Activated T-helper 1 cell treated with anti-CD3 and anti-CD28 coated beads, Interleukin-12 subunit alpha, Interleukin-12 subunit beta, Interleukin-2, Interleukin-4 antibody, amounts not matched to agents 30 ng/mL and 10 ng/mL and 1 ng/mL, durations not matched to agents 14 hours and 24 hours and 36 hours (primary cell): ENCODE measurements at regions of chr7 and their contacts with region 1.

Region 1: DNA sequence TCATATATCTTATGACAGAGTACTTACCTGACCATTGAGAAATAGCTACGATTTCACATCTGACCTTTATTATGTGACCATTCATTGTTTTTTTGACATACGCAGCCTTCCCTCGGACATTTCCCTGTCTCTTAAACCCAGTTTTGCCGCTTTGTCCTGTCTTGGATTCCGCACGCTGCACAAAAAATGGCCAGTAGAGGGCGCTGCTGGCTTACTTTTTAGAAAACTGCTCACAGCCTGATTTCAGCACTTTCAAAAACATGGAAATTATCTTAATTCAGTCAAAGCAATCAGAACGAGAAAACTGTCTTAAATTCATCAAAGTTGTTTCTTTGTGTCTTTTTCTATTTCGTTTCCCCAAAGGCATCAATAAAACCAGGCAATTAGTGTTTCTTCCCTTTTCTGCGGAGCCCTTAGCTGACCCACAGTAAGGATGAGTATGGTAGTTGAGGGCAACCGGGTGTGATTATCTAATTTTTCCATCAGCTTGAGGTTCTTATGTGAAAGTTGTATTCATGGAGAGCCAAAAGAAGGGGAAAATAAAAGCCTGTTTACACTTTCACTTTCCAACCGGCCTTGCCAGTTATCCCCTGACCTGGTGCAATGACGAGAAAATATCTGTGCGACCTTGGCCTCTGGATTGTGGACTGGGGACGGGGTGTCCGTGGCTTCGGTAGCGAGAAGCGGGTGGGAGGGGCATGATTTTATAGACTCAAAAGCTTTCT is 144.4 kb downstream of the DYNC1I1 start:
- DNase-seq: peak; percentile 41
- H3K4me3 Mint-ChIP-seq: no peak overlapping the region
- H3K27ac Mint-ChIP-seq: no peak overlapping the region
- H3K4me1 Mint-ChIP-seq: peaks cover 6% of the 10 kb centered on the region
- H3K27me3 Mint-ChIP-seq: peaks cover 14% of the 10 kb centered on the region

Region 2: DNA sequence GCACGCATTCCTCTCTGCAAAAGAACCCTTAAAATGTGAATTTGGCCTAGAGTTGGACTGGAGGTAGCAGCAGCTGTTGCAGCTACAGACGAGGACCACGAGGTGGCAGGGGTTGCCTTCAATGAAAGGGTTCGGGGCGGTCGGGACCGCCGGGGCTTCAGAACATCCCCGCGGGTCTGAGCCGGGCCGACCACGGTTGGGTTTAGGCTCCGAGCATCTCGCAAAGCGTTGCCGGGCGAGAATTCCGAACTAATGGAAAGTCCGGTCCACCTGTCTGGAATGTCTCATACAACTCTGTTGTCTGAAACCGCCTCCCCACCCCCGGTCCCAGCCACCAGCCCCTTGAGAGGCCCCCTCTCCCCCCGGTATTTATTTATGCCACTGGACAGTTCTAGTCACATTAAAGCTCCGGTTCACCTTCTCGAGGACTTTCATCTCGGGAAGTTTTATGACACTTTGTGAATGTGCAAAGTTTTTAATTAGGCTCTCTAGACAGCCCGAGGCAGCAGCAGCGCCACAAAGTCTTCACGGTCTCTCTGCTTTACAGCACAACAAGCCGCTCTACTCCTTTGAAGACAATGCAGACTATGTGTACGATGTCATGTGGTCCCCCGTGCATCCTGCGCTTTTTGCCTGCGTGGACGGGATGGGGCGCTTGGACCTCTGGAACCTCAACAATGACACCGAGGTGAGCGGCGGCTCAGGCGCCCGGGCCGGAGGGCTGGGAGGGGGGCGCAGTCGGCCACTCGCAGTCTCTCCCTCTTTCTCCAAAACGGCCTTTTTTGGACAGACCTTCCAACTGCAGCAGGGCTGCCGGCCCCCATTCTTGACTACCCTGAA is 159.0 kb after region 1 on chr7:
- intact Hi-C with region 1: loop called (anchors 5 kb)
- DNase-seq: peak; percentile 14
- H3K4me3 Mint-ChIP-seq: peak overlapping the region; percentile 80
- H3K27ac Mint-ChIP-seq: no peak overlapping the region
- H3K4me1 Mint-ChIP-seq: peaks cover 9% of the 10 kb centered on the region
- H3K27me3 Mint-ChIP-seq: peaks cover 53% of the 10 kb centered on the region

Region 3: GRCh38 chr7:96414931-96415292 is 498.2 kb after region 1 on chr7:
- intact Hi-C with region 1: loop called (anchors 2 kb)
- DNase-seq: peak; percentile 30
- H3K4me3 Mint-ChIP-seq: no peak overlapping the region
- H3K27ac Mint-ChIP-seq: no peak overlapping the region
- H3K4me1 Mint-ChIP-seq: no peaks in the 10 kb centered on the region
- H3K27me3 Mint-ChIP-seq: peaks cover 10% of the 10 kb centered on the region

Region 4: GRCh38 chr7:97027427-97028234 is 1110.9 kb after region 1 on chr7:
- intact Hi-C with region 1: loop called (anchors 1 kb)
- DNase-seq: peak; percentile 34
- H3K4me3 Mint-ChIP-seq: peak overlapping the region; percentile 20
- H3K27ac Mint-ChIP-seq: no peak overlapping the region
- H3K4me1 Mint-ChIP-seq: peaks cover 22% of the 10 kb centered on the region
- H3K27me3 Mint-ChIP-seq: peaks cover 68% of the 10 kb centered on the region

Region 5: GRCh38 chr7:97064967-97065587 is 1148.3 kb after region 1 on chr7:
- intact Hi-C with region 1: loop called (anchors 1 kb)
- DNase-seq: no peak
- H3K4me3 Mint-ChIP-seq: no peak overlapping the region
- H3K27ac Mint-ChIP-seq: no peak overlapping the region
- H3K4me1 Mint-ChIP-seq: no peaks in the 10 kb centered on the region
- H3K27me3 Mint-ChIP-seq: peaks cover 7% of the 10 kb centered on the region

Region 6: GRCh38 chr7:97179454-97180104 is 1262.8 kb after region 1 on chr7:
- intact Hi-C with region 1: loop called (anchors 2 kb)
- DNase-seq: peak; percentile 5
- H3K4me3 Mint-ChIP-seq: no peak overlapping the region
- H3K27ac Mint-ChIP-seq: no peak overlapping the region
- H3K4me1 Mint-ChIP-seq: no peaks in the 10 kb centered on the region
- H3K27me3 Mint-ChIP-seq: no peaks in the 10 kb centered on the region

Region 7: GRCh38 chr7:97835296-97836138 is 1918.8 kb after region 1 on chr7:
- intact Hi-C with region 1: loop called (anchors 1 kb)
- DNase-seq: peak; percentile 31
- H3K4me3 Mint-ChIP-seq: no peak overlapping the region
- H3K27ac Mint-ChIP-seq: no peak overlapping the region
- H3K4me1 Mint-ChIP-seq: no peaks in the 10 kb centered on the region
- H3K27me3 Mint-ChIP-seq: peaks cover 27% of the 10 kb centered on the region